ENCODE measurements at regions of chr5 and their contacts with region 1.

Region 1: DNA sequence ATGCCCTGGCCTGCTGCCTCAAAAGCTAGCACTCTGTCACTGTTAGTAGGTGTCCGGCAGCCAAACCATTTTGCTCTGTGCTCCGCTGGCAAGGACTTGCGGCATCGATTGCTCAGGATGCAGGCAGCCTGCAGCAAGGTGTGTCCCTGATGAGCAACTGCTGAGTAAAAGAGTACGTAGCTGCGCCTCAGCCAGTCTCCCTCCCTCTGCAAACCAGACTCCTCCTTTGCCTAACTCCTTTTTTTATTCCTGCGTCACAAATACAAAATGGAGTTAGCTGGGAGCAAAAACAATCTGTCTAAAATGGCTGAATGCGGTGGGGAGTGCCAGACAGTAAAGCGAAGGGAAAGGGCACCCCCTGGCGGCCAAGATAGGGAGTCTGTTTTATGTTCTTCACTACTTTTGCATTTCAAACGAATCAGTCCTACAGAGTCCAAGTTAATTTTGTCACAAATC is 61.1 kb downstream of the DIAPH1 start:
- DNase-seq: peak; percentile 53 to 86 (median 76)
- ATAC-seq: peak; percentile 83
- H3K4me3 ChIP-seq: no peak overlapping the region
- H3K4me3 Mint-ChIP-seq: no peak overlapping the region
- H3K27ac ChIP-seq: peak overlapping the region in 1 of 2 experiments; percentile 55
- H3K27ac Mint-ChIP-seq: peak overlapping the region; percentile 85
- H3K4me1 ChIP-seq: no peaks in the 10 kb centered on the region
- H3K4me1 Mint-ChIP-seq: peaks cover 28% of the 10 kb centered on the region
- H3K27me3 ChIP-seq: no peaks in the 10 kb centered on the region
- H3K27me3 Mint-ChIP-seq: no peaks in the 10 kb centered on the region
- CTCF ChIP-seq: peak; percentile 73

Region 2: DNA sequence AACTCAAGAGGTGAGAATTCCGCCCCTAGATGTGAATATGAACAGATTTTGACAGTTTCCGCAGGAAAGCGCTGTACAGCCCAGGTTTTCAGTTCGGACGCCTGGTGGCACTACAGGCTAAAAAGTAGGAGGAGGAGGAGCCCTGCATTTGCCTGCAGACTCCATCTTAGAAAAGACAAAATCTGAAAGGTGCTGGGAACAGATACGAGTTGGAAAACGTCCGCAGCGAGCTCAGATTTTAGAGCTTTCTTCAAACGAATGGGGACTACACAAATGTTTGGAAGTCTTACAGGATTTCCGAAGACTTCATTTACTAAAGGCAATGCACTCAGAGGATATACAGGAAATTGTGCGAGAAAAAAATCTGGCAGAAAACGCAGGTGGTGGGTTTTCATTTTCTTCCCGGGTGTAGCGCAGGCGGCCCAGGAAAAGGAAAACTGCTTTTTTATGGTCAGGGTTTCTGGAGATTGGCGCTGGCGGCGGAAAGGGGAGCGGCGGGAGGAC is 473.2 kb before region 1 on chr5:
- CTCF ChIA-PET with region 1: no interaction called
- POLR2A ChIA-PET with region 1: no interaction called
- intact Hi-C with region 1: loop called in 1 of 2 experiments (anchors 5 kb)
- DNase-seq: peak in 7 of 9 experiments; percentile 2 to 61 (median 23)
- ATAC-seq: peak; percentile 63
- H3K4me3 ChIP-seq: peak overlapping the region; percentile 31 to 43
- H3K4me3 Mint-ChIP-seq: peak overlapping the region; percentile 85
- H3K27ac ChIP-seq: no peak overlapping the region
- H3K27ac Mint-ChIP-seq: no peak overlapping the region
- H3K4me1 ChIP-seq: no peaks in the 10 kb centered on the region
- H3K4me1 Mint-ChIP-seq: peaks cover 9% of the 10 kb centered on the region
- H3K27me3 ChIP-seq: peaks cover 0 to 3% of the 10 kb centered on the region in 2 experiments
- H3K27me3 Mint-ChIP-seq: peaks cover 38% of the 10 kb centered on the region
- CTCF ChIP-seq: peak; percentile 46

Region 3: DNA sequence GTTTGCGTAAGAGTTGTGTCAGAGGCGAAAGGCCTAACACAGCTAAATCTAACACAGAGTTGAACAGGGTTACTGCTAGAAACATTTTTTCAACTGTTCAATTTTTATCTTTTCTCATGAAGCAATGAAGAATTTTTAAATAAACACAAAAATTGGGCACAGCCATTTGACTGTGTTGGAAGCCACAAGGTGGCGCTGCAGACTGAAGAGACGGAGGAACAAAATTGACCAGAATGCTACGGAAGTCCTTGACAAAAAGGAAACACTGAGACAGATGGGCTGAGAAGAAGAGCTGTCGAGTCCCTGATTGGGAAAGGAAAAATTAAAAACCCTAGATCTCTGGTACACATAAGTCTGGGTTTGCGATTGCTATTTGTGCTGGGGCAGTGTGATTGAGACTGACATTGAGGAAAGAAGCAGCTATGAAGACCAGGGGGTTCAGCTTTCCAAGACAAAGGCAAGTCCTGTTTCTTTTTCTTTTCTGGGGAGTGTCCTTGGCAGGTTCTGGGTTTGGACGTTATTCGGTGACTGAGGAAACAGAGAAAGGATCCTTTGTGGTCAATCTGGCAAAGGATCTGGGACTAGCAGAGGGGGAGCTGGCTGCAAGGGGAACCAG is 370.7 kb before region 1 on chr5 and contains the start of gene PCDHB9:
- CTCF ChIA-PET with region 1: no interaction called
- POLR2A ChIA-PET with region 1: no interaction called
- intact Hi-C with region 1: loop called (anchors 5 to 10 kb)
- DNase-seq: peak in 2 of 9 experiments; percentile 39 to 48
- ATAC-seq: no peak
- H3K4me3 ChIP-seq: no peak within 1 kb of the TSS
- H3K4me3 Mint-ChIP-seq: peak within 1 kb of the TSS; percentile 56
- H3K27ac ChIP-seq: no peak within 1 kb of the TSS
- H3K27ac Mint-ChIP-seq: no peak within 1 kb of the TSS
- H3K4me1 ChIP-seq: no peaks in the 10 kb centered on the region
- H3K4me1 Mint-ChIP-seq: peaks cover 5% of the 10 kb centered on the region
- H3K27me3 ChIP-seq: peaks cover 0 to 11% of the 10 kb centered on the region in 2 experiments
- H3K27me3 Mint-ChIP-seq: peaks cover 65% of the 10 kb centered on the region
- CTCF ChIP-seq: peak; percentile 17
- total RNA-seq, gene PCDHB9: not detected

Region 4: DNA sequence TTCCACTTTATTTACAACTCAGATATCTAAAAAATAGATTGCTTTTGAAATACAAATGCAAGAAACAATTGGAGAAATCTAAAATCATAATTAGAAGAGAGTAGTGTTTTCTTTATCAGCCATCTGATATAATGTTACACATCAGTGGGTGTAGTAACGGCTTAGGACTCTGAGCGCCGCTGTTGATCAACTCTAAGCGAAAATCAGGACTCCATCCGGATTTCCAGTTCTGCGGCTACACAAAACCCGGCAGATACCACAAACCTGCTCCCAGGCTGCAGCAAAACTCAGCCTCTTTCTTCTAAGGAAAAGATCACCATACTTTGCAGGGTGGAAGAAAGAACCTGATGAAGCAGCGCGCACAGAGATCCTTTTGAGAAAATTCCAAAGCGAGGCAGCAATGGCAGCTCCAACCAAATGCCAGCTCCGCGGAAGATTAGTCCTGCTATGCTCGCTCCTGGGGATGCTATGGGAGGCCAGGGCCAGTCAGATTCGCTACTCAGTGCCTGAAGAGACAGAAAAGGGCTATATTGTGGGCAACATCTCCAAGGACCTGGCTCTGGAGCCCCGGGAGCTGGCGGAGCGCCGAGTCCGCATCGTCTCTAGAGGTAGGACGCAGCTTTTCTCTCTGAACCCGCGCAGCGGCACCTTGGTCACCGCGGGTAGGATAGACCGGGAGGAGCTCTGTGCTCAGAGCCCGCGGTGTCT is 155.0 kb before region 1 on chr5 and contains the start of gene PCDHGA9:
- CTCF ChIA-PET with region 1: interaction called, 10 read pairs
- POLR2A ChIA-PET with region 1: no interaction called
- intact Hi-C with region 1: no loop called
- DNase-seq: no peak
- ATAC-seq: no peak
- H3K4me3 ChIP-seq: no peak within 1 kb of the TSS
- H3K4me3 Mint-ChIP-seq: peak within 1 kb of the TSS; percentile 39
- H3K27ac ChIP-seq: no peak within 1 kb of the TSS
- H3K27ac Mint-ChIP-seq: no peak within 1 kb of the TSS
- H3K4me1 ChIP-seq: no peaks in the 10 kb centered on the region
- H3K4me1 Mint-ChIP-seq: no peaks in the 10 kb centered on the region
- H3K27me3 ChIP-seq: peaks cover 8 to 25% of the 10 kb centered on the region in 2 experiments
- H3K27me3 Mint-ChIP-seq: peaks cover 65% of the 10 kb centered on the region
- CTCF ChIP-seq: peak; percentile 25
- total RNA-seq, gene PCDHGA9: not detected